ENCODE measurements at regions of chr13 and their contacts with region 1.

Region 1: DNA sequence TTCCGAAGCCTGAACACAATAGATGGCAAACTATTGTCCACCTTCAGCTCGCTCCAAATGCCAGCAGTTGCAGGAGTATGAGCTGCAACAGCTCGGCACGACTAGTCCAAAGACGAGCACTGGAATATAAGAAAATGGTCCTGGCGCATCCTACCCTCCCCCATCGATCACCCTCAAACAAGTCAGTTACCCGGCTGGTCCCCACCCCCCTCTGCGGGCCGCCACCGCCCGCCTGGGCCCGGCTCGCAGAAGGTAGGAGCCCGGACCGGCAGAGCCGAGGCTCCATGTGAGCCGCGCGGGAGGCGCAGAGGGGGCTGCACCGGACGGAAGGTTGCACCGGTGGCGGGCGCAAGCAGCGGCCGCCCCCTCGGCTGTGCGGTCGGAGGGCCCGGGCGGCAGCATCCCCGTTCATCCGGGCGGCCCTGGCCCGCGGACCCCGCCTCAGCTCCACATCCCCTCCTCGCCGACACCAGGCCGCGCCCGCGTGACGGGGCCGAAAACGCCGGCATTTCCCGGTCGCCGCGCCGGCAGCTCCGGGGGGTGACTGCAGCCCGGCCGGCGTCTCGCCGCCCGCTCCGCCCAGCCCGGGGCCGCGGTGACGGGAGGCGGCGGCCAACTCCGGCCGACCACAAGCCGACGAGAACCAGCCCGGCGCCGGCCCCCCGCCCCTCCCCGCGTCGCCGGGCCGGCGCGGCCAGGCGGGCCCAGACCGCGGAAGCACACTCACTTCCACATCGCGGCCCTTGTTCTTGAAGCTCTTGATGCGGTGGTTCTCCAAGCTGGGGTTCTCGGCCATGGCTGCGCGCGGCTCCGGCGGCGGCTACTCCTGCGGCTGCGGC is 552 bp downstream of the KPNA3 start:
- DNase-seq: no peak
- H3K4me3 ChIP-seq: peak overlapping the region; percentile 77
- CTCF ChIP-seq: no peak

Region 2: GRCh38 chr13:49781806-49782205 is 10.1 kb before region 1 on chr13:
- CTCF ChIA-PET with region 1: interaction called, 13 read pairs
- POLR2A ChIA-PET with region 1: interaction called, 5 read pairs
- DNase-seq: no peak
- H3K4me3 ChIP-seq: no peak overlapping the region
- CTCF ChIP-seq: no peak